Naive thymus-derived CD4-positive, alpha-beta T cell (primary cell): ENCODE measurements at regions of chr14 and their contacts with region 1.

Region 1: DNA sequence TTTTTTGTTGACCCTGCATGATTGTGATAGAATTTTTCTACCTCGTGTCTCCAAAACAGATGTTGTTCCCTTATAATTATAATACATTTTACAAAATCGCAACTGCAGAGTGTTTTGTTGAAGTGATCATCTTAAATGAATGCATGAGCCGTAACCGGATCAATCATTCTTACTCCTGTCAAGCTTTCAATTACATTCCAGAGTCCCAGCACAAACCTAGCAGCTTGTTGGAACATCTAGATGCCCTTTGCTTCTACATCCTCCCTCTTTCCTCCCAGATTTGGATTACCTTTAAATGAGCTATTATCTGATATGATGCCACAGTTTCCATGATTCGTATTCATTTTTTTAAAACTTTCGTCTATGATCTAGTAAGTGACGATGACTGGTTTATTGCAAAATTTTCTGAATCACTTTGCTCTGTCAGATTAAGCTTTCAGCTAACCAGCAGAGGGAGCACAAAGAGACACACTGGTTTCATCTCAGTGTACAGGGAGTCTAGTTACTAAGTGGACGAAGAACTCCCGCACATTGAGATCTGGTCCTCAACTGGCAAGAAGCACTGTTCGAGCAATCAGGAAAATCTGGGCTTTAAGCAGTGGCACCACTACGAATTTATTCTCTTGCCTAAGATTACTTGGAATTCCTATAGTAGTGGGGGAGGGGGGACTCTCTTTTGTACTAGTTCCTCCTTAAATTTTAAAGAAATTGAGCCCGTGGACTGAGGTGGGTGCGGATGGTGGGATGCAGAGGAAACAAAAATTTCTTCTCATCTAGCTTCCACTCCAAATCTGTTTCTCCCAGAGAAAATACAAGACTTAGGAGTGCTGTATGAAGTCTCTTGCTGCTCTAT is 40.9 kb downstream of the TSHR start:
- DNase-seq: peak in 6 of 9 donors; percentile 27 to 55 (median 34)
- ATAC-seq: peak; percentile 87
- H3K4me3 ChIP-seq: no peak overlapping the region
- H3K4me3 Mint-ChIP-seq: no peak overlapping the region
- H3K27ac ChIP-seq: no peak overlapping the region
- H3K27ac Mint-ChIP-seq: peak overlapping the region in 1 of 9 donors; percentile 4
- H3K4me1 ChIP-seq: no peaks in the 10 kb centered on the region
- H3K4me1 Mint-ChIP-seq: peaks cover 0 to 8% (median 4%) of the 10 kb centered on the region in 7 donors
- H3K27me3 ChIP-seq: no peaks in the 10 kb centered on the region
- H3K27me3 Mint-ChIP-seq: peaks cover 26 to 59% (median 37%) of the 10 kb centered on the region in 5 donors

Region 2: GRCh38 chr14:81033698-81034240 is 37.5 kb after region 1 on chr14:
- CTCF ChIA-PET with region 1: no interaction called
- POLR2A ChIA-PET with region 1: no interaction called
- intact Hi-C with region 1: no loop called
- DNase-seq: no peak
- ATAC-seq: peak; percentile 40
- H3K4me3 ChIP-seq: no peak overlapping the region
- H3K4me3 Mint-ChIP-seq: no peak overlapping the region
- H3K27ac ChIP-seq: no peak overlapping the region
- H3K27ac Mint-ChIP-seq: no peak overlapping the region
- H3K4me1 ChIP-seq: no peaks in the 10 kb centered on the region
- H3K4me1 Mint-ChIP-seq: peaks cover 0 to 14% (median 0%) of the 10 kb centered on the region in 7 donors
- H3K27me3 ChIP-seq: peaks cover 0 to 3% of the 10 kb centered on the region in 2 donors
- H3K27me3 Mint-ChIP-seq: peaks cover 8 to 18% (median 17%) of the 10 kb centered on the region in 5 donors

Region 3: GRCh38 chr14:81164167-81164774 is 168.0 kb after region 1 on chr14:
- CTCF ChIA-PET with region 1: interaction called, 31 read pairs
- POLR2A ChIA-PET with region 1: no interaction called
- intact Hi-C with region 1: loop called in 1 of 2 experiments (anchors 1 kb)
- DNase-seq: peak in 5 of 9 donors; percentile 6 to 56 (median 10)
- ATAC-seq: peak; percentile 79
- H3K4me3 ChIP-seq: no peak overlapping the region
- H3K4me3 Mint-ChIP-seq: no peak overlapping the region
- H3K27ac ChIP-seq: no peak overlapping the region
- H3K27ac Mint-ChIP-seq: no peak overlapping the region
- H3K4me1 ChIP-seq: peaks cover under 1 to 2% of the 10 kb centered on the region in 2 donors
- H3K4me1 Mint-ChIP-seq: peaks cover under 1 to 24% (median 11%) of the 10 kb centered on the region in 7 donors
- H3K27me3 ChIP-seq: no peaks in the 10 kb centered on the region
- H3K27me3 Mint-ChIP-seq: no peaks in the 10 kb centered on the region

Region 4: DNA sequence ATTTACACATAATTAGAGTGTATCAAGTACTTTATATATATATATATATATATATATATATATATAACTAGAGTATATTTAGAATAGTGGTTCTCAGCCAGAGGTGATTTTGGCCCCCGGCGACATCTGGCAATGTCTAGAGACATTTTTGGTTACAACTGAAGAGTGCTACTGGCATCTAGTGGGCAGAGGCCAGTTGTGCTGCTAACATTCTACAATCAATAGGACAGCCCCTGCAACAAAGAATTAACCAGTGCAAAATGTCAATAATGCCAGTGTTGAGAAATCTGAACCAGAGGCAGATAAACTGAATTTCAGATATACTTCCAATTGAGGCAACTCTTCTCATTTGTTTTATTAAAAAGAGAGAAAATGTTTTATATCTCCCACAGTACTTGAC is 215.6 kb after region 1 on chr14:
- CTCF ChIA-PET with region 1: interaction called, 4 read pairs
- POLR2A ChIA-PET with region 1: no interaction called
- intact Hi-C with region 1: loop called (anchors 1 kb)
- DNase-seq: peak in 6 of 9 donors; percentile 5 to 37 (median 18)
- ATAC-seq: peak; percentile 82
- H3K4me3 ChIP-seq: no peak overlapping the region
- H3K4me3 Mint-ChIP-seq: no peak overlapping the region
- H3K27ac ChIP-seq: no peak overlapping the region
- H3K27ac Mint-ChIP-seq: peak overlapping the region in 2 of 9 donors; percentile 23 to 72
- H3K4me1 ChIP-seq: no peaks in the 10 kb centered on the region
- H3K4me1 Mint-ChIP-seq: peaks cover 32 to 66% (median 56%) of the 10 kb centered on the region in 7 donors
- H3K27me3 ChIP-seq: no peaks in the 10 kb centered on the region
- H3K27me3 Mint-ChIP-seq: no peaks in the 10 kb centered on the region

Region 5: DNA sequence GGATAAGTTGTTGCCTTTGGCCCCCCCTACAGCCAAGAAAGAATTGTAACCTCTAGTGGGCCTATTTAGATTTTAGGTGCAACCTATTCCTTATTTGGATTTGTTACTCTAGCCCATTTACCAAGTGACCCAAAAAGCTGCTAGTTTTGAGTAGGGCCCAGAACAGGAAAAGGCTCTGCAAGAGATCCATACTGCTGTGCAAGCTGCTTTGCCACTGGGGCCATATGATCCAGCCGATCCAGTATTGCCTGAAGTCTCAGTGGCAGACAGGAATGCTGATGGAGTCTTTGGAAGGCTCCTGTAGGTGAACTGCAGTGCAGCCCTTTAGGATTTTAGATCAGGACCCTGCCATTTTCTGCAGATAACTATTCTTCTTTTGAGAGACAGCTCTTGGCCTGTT is 237.3 kb after region 1 on chr14:
- CTCF ChIA-PET with region 1: no interaction called
- POLR2A ChIA-PET with region 1: no interaction called
- intact Hi-C with region 1: loop called in 1 of 2 experiments (anchors 1 kb)
- DNase-seq: no peak
- ATAC-seq: no peak
- H3K4me3 ChIP-seq: no peak overlapping the region
- H3K4me3 Mint-ChIP-seq: no peak overlapping the region
- H3K27ac ChIP-seq: no peak overlapping the region
- H3K27ac Mint-ChIP-seq: peak overlapping the region in 1 of 9 donors; percentile 13
- H3K4me1 ChIP-seq: no peaks in the 10 kb centered on the region
- H3K4me1 Mint-ChIP-seq: peaks cover 0 to 6% (median 3%) of the 10 kb centered on the region in 7 donors
- H3K27me3 ChIP-seq: no peaks in the 10 kb centered on the region
- H3K27me3 Mint-ChIP-seq: peaks cover 0 to 4% (median 0%) of the 10 kb centered on the region in 5 donors

Region 6: GRCh38 chr14:81453166-81453766 is 457.0 kb after region 1 on chr14:
- CTCF ChIA-PET with region 1: interaction called, 5 read pairs
- POLR2A ChIA-PET with region 1: no interaction called
- intact Hi-C with region 1: loop called in 1 of 2 experiments (anchors 2 kb)
- DNase-seq: peak in 7 of 9 donors; percentile 17 to 46 (median 34)
- ATAC-seq: peak; percentile 86
- H3K4me3 ChIP-seq: no peak overlapping the region
- H3K4me3 Mint-ChIP-seq: peak overlapping the region in 1 of 10 donors; percentile 19
- H3K27ac ChIP-seq: no peak overlapping the region
- H3K27ac Mint-ChIP-seq: no peak overlapping the region
- H3K4me1 ChIP-seq: no peaks in the 10 kb centered on the region
- H3K4me1 Mint-ChIP-seq: peaks cover 0 to 7% (median 0%) of the 10 kb centered on the region in 7 donors
- H3K27me3 ChIP-seq: no peaks in the 10 kb centered on the region
- H3K27me3 Mint-ChIP-seq: peaks cover 0 to 18% (median 5%) of the 10 kb centered on the region in 5 donors

Region 7: DNA sequence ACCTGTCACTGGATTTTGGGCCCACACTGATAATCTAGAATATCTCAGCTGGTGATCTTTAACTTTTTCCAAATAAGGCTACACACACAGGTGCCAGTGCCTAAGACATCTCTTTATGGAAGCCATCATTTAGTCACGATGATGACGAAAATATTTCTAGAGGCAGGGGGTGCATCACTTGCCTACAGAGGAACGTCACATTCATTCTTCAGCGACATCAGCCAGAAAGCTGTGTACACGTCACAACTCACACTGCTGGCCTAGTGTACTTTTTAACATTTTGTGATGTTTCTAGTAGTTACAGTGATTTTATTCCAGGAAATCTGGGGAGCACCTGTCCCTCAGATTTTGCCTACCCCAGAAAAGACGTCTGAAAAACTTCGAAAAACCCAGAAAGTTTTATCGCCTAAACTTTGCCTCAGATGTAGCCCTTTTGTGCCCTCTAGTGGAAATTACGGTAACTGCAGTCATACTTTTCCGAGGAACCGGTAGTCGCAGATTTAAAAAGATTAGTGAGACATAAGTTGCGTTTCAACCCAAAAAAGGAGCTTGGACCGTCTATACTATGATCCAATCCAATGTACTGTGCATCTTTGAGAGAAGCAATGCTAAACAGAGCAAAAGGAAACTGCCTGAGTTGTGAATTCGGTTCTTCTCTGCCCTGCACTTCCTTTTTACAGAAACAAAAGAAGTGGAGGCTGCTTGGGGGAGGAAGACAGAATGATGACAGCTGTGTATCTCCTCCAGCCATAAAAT is 468.1 kb after region 1 on chr14:
- CTCF ChIA-PET with region 1: interaction called, 10 read pairs
- POLR2A ChIA-PET with region 1: no interaction called
- intact Hi-C with region 1: loop called in 1 of 2 experiments (anchors 1 kb)
- DNase-seq: peak; percentile 15 to 86 (median 75)
- ATAC-seq: peak; percentile 90
- H3K4me3 ChIP-seq: peak overlapping the region; percentile 85
- H3K4me3 Mint-ChIP-seq: peak overlapping the region; percentile 76 to 91 (median 88)
- H3K27ac ChIP-seq: peak overlapping the region; percentile 76
- H3K27ac Mint-ChIP-seq: peak overlapping the region; percentile 70 to 98 (median 91)
- H3K4me1 ChIP-seq: no peaks in the 10 kb centered on the region
- H3K4me1 Mint-ChIP-seq: peaks cover 0 to 14% (median 8%) of the 10 kb centered on the region in 7 donors
- H3K27me3 ChIP-seq: no peaks in the 10 kb centered on the region
- H3K27me3 Mint-ChIP-seq: no peaks in the 10 kb centered on the region